HepG2 (cell line): ENCODE measurements at regions of chr19 and their contacts with region 1.

Region 1: GRCh38 chr19:38319421-38320258 is at the start of gene KCNK6:
- DNase-seq: no peak
- ATAC-seq: peak; percentile 24
- H3K4me3 ChIP-seq: peak within 1 kb of the TSS; percentile 13 to 63 (median 31); a peak in 5 of 6 replicates
- H3K27ac ChIP-seq: no peak within 1 kb of the TSS
- H3K4me1 ChIP-seq: peaks cover 23% of the 10 kb centered on the region
- H3K27me3 ChIP-seq: peaks cover 8 to 52% of the 10 kb centered on the region in 2 experiments; a peak in 4 of 5 replicates
- CTCF ChIP-seq: no peak
- EP300 ChIP-seq: no peak
- POLR2A ChIP-seq: no peak
- RAD21 ChIP-seq: no peak; the same call in 1 of the 2 replicates
- total RNA-seq, gene KCNK6: not detected in 2 replicates

Region 2: GRCh38 chr19:38250821-38251563 is 68.6 kb before region 1 on chr19:
- CTCF ChIA-PET with region 1: no interaction called
- POLR2A ChIA-PET with region 1: no interaction called
- in situ Hi-C with region 1: no loop called
- intact Hi-C with region 1: loop called (anchors 5 kb)
- DNase-seq: peak; percentile 82
- ATAC-seq: peak; percentile 70
- H3K4me3 ChIP-seq: peak overlapping the region in 1 of 3 experiments; percentile 51; a peak in 1 of 6 replicates
- H3K27ac ChIP-seq: no peak overlapping the region
- H3K4me1 ChIP-seq: peaks cover 43% of the 10 kb centered on the region
- H3K27me3 ChIP-seq: peaks cover 4 to 20% of the 10 kb centered on the region in 2 experiments; a peak in 3 of 5 replicates
- CTCF ChIP-seq: no peak
- EP300 ChIP-seq: peak in 1 of 2 experiments; percentile 79; a peak in 2 of 4 replicates
- POLR2A ChIP-seq: no peak
- RAD21 ChIP-seq: no peak